ENCODE measurements at regions of chr21 and their contacts with region 1.

Region 1: GRCh38 chr21:41598561-41599431 is 90.8 kb upstream of the TMPRSS2 start:
- DNase-seq: peak in 1 of 5 donors; percentile 6
- ATAC-seq: no peak
- H3K4me3 ChIP-seq: no peak overlapping the region
- H3K27ac ChIP-seq: no peak overlapping the region
- H3K4me1 ChIP-seq: peaks cover 0 to 4% (median 0%) of the 10 kb centered on the region in 12 donors
- H3K27me3 ChIP-seq: peaks cover 0 to 16% (median 0%) of the 10 kb centered on the region in 9 donors
- CTCF ChIP-seq: no peak
- POLR2A ChIP-seq: no peak

Region 2: DNA sequence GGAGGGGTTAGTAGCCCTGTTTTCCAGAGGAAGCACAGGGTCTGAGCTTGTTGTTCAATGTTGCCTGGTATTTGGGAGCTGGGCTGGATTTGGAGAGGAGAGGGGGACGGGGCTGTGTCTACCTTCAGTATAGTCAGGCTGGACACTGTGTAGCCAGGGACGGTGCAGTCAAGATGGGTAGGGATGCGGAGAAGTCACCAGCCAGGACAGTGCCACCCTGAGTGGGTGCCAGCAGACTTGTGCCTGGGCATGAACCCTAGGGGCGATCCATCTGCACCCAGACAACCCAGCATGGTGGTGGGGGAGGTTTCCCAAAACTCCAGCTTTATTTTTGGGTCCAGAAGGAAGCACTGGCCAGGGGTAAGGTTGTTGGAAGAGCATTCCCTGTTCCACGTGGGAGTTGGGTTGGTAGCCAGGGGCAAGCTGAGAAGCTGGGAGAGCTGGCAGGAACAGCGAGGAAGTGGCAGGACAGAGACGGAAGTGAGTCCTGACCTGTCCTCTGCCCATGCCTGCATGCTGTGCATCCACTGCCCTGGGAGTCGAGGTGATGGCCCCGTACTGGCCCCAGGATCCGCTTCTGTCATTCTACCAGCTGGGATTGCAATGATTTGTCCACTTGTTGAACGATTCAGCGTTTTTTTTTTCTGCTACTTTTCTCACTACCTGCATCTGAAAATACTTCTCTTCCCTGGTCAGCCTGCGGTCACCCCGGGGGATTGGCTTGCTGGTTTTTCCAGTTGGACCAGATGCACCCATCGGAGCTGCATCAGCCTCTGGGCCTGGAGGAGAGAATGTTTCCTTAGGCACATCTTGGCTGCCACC is 62.8 kb before region 1 on chr21:
- intact Hi-C with region 1: loop called in 1 of 10 experiments (anchors 10 kb)
- DNase-seq: no peak
- ATAC-seq: no peak
- H3K4me3 ChIP-seq: no peak overlapping the region
- H3K27ac ChIP-seq: no peak overlapping the region
- H3K4me1 ChIP-seq: no peaks in the 10 kb centered on the region
- H3K27me3 ChIP-seq: peaks cover 0 to 25% (median 0%) of the 10 kb centered on the region in 9 donors
- CTCF ChIP-seq: no peak
- POLR2A ChIP-seq: no peak

Region 3: GRCh38 chr21:41631564-41632461 is 33.0 kb after region 1 on chr21:
- intact Hi-C with region 1: no loop called
- DNase-seq: no peak
- ATAC-seq: no peak
- H3K4me3 ChIP-seq: no peak overlapping the region
- H3K27ac ChIP-seq: no peak overlapping the region
- H3K4me1 ChIP-seq: no peaks in the 10 kb centered on the region
- H3K27me3 ChIP-seq: peaks cover 0 to 7% (median 0%) of the 10 kb centered on the region in 9 donors
- CTCF ChIP-seq: no peak
- POLR2A ChIP-seq: no peak

Measured in heart left ventricle (tissue), 16 donors.